ENCODE measurements at regions of chr11 and their contacts with region 1.

Region 1: DNA sequence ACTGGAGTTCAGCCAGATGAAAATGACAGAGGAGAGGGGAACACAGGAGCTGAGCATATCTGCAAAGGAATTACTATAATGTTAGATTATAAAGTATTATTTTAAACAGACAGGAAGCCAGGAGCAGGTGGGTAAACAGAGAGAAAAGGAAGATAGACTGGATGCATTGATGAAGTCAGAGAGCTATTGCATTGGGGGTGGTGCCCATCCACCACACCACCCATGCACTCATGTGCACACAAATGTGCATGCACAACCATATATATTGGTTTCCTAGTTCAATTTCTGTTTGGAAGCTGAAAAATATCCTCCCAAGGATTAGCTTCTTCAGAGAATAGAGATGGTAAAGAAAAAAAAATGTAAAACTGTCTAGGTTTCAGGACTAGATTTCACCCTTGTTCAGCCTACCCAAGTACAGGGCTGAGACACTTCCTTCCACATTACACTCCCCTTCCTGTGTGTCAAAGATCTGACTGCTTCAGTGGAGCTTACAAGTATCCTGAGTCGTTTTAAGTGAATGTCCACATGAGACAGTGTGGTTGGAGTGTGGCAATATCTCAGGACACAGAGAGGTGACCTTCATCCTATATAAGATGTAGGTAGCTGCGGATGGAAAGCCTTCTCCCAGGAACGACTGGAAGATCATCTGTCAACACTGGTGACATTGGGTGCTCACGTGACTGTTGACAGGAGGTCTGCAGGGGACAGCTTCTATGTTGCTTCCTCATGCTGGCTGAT is 12.2 kb upstream of the SMPD1 start:
- DNase-seq: no peak
- H3K4me3 ChIP-seq: no peak overlapping the region
- CTCF ChIP-seq: no peak

Region 2: DNA sequence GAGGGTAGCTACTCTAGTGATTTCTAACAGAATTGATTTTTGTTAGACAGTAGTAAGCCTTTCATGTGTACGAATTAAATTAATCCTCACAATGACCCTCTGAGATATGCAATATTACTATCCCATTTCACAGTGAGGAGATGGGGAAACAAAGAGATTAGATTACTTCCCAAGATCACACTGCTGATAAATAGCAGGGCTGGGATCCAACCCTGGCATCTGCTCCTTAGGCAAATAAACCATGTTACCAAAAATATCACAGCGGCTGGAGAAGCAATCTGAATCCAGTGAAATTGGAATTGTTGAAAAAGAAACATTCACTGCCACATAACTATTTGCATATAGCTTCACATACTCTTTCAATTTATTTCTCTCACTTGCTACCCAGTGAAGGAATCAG is 45.0 kb before region 1 on chr11:
- CTCF ChIA-PET with region 1: no interaction called
- POLR2A ChIA-PET with region 1: no interaction called
- DNase-seq: no peak
- H3K4me3 ChIP-seq: no peak overlapping the region
- CTCF ChIP-seq: no peak

Region 3: DNA sequence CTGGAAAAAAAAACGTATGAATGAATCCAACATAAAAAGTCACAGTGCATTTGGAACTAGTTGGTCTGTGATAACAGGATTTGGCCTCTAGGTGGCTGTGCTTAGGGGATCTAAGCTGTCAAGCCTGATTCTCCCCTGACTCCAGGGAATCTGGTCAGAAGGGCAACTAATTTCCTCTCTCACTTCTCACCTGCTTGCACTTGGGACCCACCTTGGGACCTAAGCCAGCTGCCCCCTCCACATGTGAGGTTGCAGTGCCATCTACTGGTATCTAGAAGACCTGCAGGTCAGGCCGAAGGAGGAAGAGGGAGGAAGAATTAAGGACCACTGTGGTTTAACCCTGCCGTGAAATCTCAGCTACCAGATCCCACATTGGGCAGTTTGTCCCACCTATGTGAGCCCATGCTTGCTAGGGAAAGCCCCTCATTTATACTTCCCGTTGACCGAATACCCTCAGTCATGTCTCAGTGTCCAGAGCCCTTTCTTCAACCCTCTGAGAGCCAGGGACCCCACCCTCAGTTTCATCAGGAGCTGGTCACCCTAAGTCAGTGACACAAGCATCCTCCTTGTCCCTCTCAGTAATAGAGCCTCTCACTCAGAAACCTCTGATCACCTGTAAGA is 24.6 kb before region 1 on chr11:
- CTCF ChIA-PET with region 1: interaction called, 15 read pairs
- POLR2A ChIA-PET with region 1: no interaction called
- DNase-seq: no peak
- H3K4me3 ChIP-seq: no peak overlapping the region
- CTCF ChIP-seq: peak; percentile 86

Region 4: DNA sequence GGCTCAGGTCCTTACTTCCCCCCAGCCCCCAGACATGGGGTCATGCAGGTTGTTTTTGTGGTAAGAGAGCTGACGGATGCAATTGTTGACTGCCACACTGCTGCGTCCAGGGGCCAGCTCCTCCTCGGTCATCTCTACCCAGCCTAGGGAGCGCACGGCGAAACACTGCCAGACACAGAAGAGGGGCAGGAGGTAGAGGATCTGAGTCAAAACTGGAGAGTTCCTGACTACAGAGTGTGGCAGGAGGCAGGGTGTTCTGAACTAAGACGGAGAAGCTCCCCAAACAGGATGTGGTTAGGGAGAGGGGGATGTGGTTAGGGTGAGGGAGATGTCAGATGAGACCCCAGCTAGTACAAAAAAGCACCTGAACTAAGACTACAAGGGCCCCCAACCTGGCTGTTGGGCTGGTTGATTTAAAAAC is 24.5 kb after region 1 on chr11:
- CTCF ChIA-PET with region 1: interaction called, 19 read pairs
- POLR2A ChIA-PET with region 1: no interaction called
- DNase-seq: no peak
- H3K4me3 ChIP-seq: no peak overlapping the region
- CTCF ChIP-seq: no peak

Region 5: DNA sequence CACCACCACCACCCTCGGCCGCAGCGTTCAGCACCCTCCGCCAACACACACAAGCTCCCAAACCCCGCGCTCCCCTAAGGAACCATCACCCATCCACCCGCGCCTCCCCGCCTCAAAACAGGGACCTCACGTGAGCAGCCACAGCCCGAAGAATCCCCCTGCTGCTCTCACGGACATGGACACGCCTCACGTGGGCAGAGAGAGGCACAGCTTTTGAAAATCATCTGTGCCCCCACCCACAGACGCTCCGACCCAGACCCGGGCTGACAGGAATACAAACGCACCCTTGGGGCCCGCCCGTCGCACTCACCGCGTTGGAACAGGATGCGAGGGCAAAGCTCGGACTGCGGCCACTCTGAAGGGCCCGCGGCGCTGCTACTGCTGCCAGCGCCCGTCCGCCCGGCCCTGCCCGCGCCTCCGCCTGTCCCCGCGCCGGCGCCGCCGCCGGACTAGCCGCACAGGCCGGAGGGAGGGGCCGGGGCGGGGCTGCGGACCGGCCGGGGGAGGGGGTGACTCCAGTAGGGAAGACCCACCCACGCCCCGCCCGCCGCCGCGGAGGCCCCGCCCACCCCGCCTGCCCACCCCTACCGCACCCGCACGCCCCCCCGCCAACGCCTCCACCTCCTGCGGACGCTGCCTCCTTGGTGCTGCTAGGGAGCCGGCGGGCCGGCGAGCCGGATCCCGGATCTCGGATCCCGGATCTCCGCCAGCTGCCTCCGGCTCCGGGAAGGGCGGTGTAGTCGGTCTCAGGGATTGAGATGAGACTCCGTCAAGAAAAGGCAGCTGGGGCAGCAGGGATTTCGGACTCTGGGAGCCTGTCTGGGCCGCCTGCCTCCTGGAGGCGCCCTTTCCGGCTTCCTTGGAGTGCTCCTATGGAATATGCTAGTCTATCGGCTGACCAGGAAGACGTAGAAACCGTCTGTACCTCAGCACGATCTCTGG is 95.7 kb after region 1 on chr11 and contains the start of gene TRIM3:
- CTCF ChIA-PET with region 1: interaction called, 56 read pairs
- POLR2A ChIA-PET with region 1: no interaction called
- DNase-seq: peak; percentile 10
- H3K4me3 ChIP-seq: peak within 1 kb of the TSS; percentile 77
- CTCF ChIP-seq: peak; percentile 40

Region 6: GRCh38 chr11:6497069-6497839 is 119.2 kb after region 1 on chr11 and contains the start of gene DNHD1:
- CTCF ChIA-PET with region 1: interaction called, 10 read pairs
- POLR2A ChIA-PET with region 1: no interaction called
- DNase-seq: no peak
- H3K4me3 ChIP-seq: no peak within 1 kb of the TSS
- CTCF ChIP-seq: no peak

Region 7: DNA sequence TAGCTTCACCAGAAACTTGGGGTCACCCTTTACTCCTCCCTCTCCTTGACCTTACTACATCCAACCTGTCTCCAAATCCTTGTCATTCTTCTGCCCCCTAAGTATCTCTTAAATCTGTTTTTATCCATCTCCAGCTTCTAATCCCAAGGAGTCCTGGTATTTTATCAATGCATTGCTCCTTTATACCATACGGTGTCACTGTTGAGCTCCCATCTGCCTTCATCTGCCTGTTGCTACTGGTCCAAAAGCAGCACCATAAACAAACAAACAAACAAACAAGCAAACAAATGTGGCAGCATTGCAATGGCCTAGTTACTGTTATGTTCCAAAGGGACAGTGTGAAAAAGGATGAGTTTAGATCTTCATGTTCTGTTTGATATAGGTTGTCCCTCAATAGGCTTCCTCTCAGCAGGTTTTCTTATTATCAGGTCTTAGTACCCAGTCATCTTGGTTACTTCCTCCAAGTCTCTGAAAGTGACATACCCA is 153.2 kb after region 1 on chr11:
- CTCF ChIA-PET with region 1: interaction called, 28 read pairs
- POLR2A ChIA-PET with region 1: no interaction called
- DNase-seq: no peak
- H3K4me3 ChIP-seq: no peak overlapping the region
- CTCF ChIP-seq: peak; percentile 52

Region 8: GRCh38 chr11:6705905-6706535 is 327.9 kb after region 1 on chr11:
- CTCF ChIA-PET with region 1: interaction called, 111 read pairs
- POLR2A ChIA-PET with region 1: no interaction called
- DNase-seq: no peak
- H3K4me3 ChIP-seq: no peak overlapping the region
- CTCF ChIP-seq: peak; percentile 75

Measured in AG04449 (cell line).